ENCODE measurements at regions of chr17 and their contacts with region 1.

Region 1: GRCh38 chr17:48037036-48037837 is at the start of gene COPZ2:
- DNase-seq: peak; percentile 69
- H3K4me3 ChIP-seq: peak within 1 kb of the TSS; percentile 36 to 64 (median 52)
- H3K27ac ChIP-seq: peak within 1 kb of the TSS; percentile 65 to 77 (median 70)
- H3K4me1 ChIP-seq: peaks cover 0 to 16% (median 7%) of the 10 kb centered on the region in 4 donors
- H3K27me3 ChIP-seq: peaks cover 38% of the 10 kb centered on the region
- CTCF ChIP-seq: peak; percentile 49 to 63 (median 53)
- EP300 ChIP-seq: no peak
- POLR2A ChIP-seq: no peak
- total RNA-seq, gene COPZ2: 6.0 to 11.2 (median 8.3) TPM

Region 2: DNA sequence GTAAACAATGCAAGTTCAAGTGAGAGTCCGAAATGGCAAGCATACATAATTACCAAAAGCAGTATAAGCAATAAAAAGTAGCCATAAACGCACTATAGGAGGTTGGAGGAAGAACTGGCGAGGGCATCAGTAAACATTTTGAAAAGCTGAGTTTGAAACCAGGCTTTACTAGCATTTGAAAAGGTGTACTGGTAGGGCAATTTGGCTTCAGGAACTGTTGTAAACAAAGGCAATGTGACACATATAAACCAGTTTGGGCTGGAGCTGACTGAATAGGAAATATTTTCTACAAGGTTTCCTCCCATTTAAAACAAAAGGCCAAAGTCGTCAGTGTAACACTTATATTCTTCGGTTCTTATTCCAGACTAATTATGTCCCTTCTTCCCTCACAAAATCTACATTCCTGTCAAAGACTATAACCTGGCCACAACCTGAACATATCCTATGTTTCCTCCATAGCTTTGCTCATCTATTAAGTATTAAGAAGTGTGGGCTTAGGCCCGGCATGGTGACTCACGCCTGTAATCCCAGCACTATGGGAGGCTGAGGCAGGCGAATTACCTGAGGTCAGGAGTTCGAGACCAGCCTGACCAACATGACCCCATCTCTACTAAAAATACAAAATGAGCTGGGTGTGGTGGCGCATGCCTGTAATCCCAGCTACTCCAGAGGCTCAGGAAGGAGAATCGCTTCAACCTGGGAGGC is 56.3 kb after region 1 on chr17:
- in situ Hi-C with region 1: loop called in 1 of 4 experiments (anchors 10 kb)
- intact Hi-C with region 1: no loop called
- DNase-seq: peak; percentile 23
- H3K4me3 ChIP-seq: no peak overlapping the region
- H3K27ac ChIP-seq: peak overlapping the region; percentile 57 to 81 (median 73)
- H3K4me1 ChIP-seq: peaks cover 0 to 60% (median 12%) of the 10 kb centered on the region in 4 donors
- H3K27me3 ChIP-seq: no peaks in the 10 kb centered on the region
- CTCF ChIP-seq: no peak
- EP300 ChIP-seq: no peak
- POLR2A ChIP-seq: no peak

Region 3: DNA sequence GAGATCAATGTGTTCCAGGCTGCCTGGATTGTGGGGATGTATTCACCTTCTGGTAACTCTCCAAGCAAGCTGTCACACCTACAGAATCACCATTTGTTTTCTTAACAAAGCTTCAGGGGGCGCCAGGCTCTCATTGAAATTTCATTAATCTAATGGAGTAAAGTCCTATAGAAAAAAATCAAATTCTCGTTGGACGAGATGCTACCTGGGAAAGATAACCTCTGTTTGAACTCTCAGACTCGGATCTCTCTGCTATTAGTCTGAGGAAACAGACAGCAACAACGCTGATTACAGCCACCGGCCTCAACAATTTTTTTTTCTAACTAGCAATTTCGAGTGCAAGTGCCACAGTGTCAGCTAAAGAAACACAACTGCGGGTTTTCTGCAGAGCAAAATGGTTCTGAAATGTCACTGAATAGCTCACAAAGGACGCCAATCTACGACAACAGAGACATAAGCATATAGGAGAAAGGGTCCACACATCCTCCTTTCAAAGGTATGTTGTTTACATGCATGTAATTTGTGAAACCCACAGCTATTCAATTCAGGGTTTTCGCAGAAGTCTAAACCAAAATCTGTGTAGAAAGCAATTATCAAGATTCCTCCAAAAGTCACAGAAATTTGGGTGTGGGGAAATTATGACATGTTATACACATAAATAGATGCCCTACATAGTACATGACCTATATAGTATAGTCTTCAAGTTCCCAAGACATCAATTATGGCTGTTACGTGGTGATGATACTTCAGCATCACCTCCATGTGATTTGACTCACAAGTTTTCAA is 257.0 kb after region 1 on chr17:
- in situ Hi-C with region 1: no loop called
- intact Hi-C with region 1: no loop called
- DNase-seq: no peak
- H3K4me3 ChIP-seq: no peak overlapping the region
- H3K27ac ChIP-seq: no peak overlapping the region
- H3K4me1 ChIP-seq: peaks cover 0 to 30% (median 4%) of the 10 kb centered on the region in 4 donors
- H3K27me3 ChIP-seq: peaks cover 44% of the 10 kb centered on the region
- CTCF ChIP-seq: no peak
- EP300 ChIP-seq: no peak
- POLR2A ChIP-seq: no peak

Region 4: DNA sequence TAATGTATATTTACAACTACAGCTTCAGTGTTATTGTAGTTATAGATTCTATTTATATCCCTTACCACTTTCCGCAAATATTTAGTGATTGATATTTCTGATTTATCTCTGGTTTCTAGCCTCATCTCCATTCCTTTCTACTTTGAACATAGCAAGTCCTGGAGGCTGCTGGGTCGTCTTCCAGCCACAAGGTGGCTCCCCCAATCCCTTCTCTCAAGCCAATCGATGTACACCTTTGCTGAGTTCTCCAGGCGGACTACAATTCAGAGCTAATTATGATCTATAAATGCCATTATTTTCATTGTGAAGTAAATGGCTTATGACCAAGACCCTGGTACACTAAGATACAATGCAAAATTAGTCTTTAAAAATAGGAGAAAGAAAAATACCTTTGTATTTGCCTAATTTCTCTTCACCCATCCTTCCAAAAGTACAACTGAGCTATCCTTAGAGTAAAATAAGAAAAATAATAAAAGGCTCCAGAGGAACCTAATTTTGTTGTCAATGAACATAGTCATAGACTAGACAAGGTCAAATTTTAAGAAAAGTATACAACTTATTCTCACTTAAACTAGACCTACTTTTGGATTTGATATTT is 270.7 kb after region 1 on chr17:
- in situ Hi-C with region 1: no loop called
- intact Hi-C with region 1: no loop called
- DNase-seq: peak; percentile 64
- H3K4me3 ChIP-seq: no peak overlapping the region
- H3K27ac ChIP-seq: no peak overlapping the region
- H3K4me1 ChIP-seq: peaks cover 0 to 6% (median 2%) of the 10 kb centered on the region in 4 donors
- H3K27me3 ChIP-seq: peaks cover 65% of the 10 kb centered on the region
- CTCF ChIP-seq: peak; percentile 71 to 85 (median 76)
- EP300 ChIP-seq: no peak
- POLR2A ChIP-seq: no peak

Measured in transverse colon (tissue), 4 donors.